Mammary epithelial cell (primary cell): ENCODE measurements at regions of chr11 and their contacts with region 1.

Region 1: DNA sequence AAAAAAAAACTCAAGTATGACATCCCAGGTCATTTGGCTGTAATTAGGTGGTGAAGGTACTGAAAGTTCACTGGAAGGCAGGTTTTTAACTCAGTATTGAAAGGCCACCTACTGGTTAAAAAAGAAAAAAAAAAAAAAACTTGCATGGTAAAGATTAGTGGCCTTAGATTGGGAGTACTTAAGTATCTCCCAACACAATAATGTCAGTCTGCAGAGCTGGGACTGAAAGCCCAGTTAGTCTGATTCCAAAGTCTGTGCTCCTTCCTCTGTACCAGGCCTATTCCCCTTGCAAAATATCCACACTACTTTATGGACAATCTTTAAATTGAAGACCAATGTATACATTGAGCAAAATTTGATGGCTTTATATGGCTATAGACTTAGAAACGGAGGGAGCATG is 85.5 kb downstream of the NOX4 start:
- DNase-seq: peak; percentile 26
- H3K4me3 ChIP-seq: no peak overlapping the region
- H3K27ac ChIP-seq: no peak overlapping the region
- H3K4me1 ChIP-seq: no peaks in the 10 kb centered on the region
- H3K27me3 ChIP-seq: no peaks in the 10 kb centered on the region
- CTCF ChIP-seq: peak in 1 of 2 donors; percentile 46

Region 2: GRCh38 chr11:89327885-89328284 is 77.7 kb before region 1 on chr11:
- CTCF ChIA-PET with region 1: no interaction called
- dilution Hi-C with region 1: no loop called
- in situ Hi-C with region 1: loop called in 1 of 2 experiments (anchors 5 kb)
- intact Hi-C with region 1: loop called (anchors 1 kb)
- DNase-seq: no peak
- H3K4me3 ChIP-seq: no peak overlapping the region
- H3K27ac ChIP-seq: no peak overlapping the region
- H3K4me1 ChIP-seq: no peaks in the 10 kb centered on the region
- H3K27me3 ChIP-seq: no peaks in the 10 kb centered on the region
- CTCF ChIP-seq: no peak

Region 3: GRCh38 chr11:89347071-89347470 is 58.6 kb before region 1 on chr11:
- CTCF ChIA-PET with region 1: no interaction called
- dilution Hi-C with region 1: no loop called
- in situ Hi-C with region 1: loop called in 1 of 2 experiments (anchors 10 kb)
- intact Hi-C with region 1: no loop called
- DNase-seq: no peak
- H3K4me3 ChIP-seq: no peak overlapping the region
- H3K27ac ChIP-seq: no peak overlapping the region
- H3K4me1 ChIP-seq: no peaks in the 10 kb centered on the region
- H3K27me3 ChIP-seq: no peaks in the 10 kb centered on the region
- CTCF ChIP-seq: no peak

Region 4: GRCh38 chr11:89361734-89362133 is 43.9 kb before region 1 on chr11:
- CTCF ChIA-PET with region 1: no interaction called
- dilution Hi-C with region 1: no loop called
- in situ Hi-C with region 1: no loop called
- intact Hi-C with region 1: no loop called
- DNase-seq: no peak
- H3K4me3 ChIP-seq: no peak overlapping the region
- H3K27ac ChIP-seq: no peak overlapping the region
- H3K4me1 ChIP-seq: no peaks in the 10 kb centered on the region
- H3K27me3 ChIP-seq: no peaks in the 10 kb centered on the region
- CTCF ChIP-seq: no peak

Region 5: GRCh38 chr11:89433278-89433677 is 27.6 kb after region 1 on chr11:
- CTCF ChIA-PET with region 1: no interaction called
- dilution Hi-C with region 1: no loop called
- in situ Hi-C with region 1: no loop called
- intact Hi-C with region 1: no loop called
- DNase-seq: no peak
- H3K4me3 ChIP-seq: no peak overlapping the region
- H3K27ac ChIP-seq: no peak overlapping the region
- H3K4me1 ChIP-seq: no peaks in the 10 kb centered on the region
- H3K27me3 ChIP-seq: no peaks in the 10 kb centered on the region
- CTCF ChIP-seq: no peak

Region 6: GRCh38 chr11:89443361-89444322 is 38.0 kb after region 1 on chr11:
- CTCF ChIA-PET with region 1: no interaction called
- dilution Hi-C with region 1: no loop called
- in situ Hi-C with region 1: no loop called
- intact Hi-C with region 1: no loop called
- DNase-seq: no peak
- H3K4me3 ChIP-seq: no peak overlapping the region
- H3K27ac ChIP-seq: no peak overlapping the region
- H3K4me1 ChIP-seq: no peaks in the 10 kb centered on the region
- H3K27me3 ChIP-seq: no peaks in the 10 kb centered on the region
- CTCF ChIP-seq: no peak

Region 7: DNA sequence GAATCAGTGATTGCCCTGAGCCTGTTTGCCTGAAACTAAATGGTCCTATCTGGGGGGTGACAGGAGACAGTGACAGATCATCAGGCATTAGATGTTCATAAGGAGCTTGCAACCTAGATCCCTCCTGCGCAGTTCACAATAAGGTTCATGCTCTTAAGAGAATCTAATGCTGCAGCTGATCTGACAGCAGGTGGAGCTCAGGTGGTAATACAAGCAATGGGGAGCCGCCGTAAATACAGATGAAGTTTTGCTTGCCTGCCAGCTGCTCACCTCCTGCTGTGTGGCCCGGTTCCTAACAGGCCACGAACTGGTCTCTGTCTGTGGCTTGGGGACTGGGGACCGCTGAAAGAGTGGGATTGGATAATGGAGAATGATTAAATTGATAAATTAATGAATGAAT is 71.5 kb after region 1 on chr11:
- CTCF ChIA-PET with region 1: no interaction called
- dilution Hi-C with region 1: no loop called
- in situ Hi-C with region 1: no loop called
- intact Hi-C with region 1: no loop called
- DNase-seq: no peak
- H3K4me3 ChIP-seq: no peak overlapping the region
- H3K27ac ChIP-seq: no peak overlapping the region
- H3K4me1 ChIP-seq: no peaks in the 10 kb centered on the region
- H3K27me3 ChIP-seq: no peaks in the 10 kb centered on the region
- CTCF ChIP-seq: no peak